A549 (cell line): ENCODE measurements at regions of chr11 and their contacts with region 1.

Region 1: GRCh38 chr11:69296890-69297786 is 3.2 kb downstream of the MYEOV start:
- DNase-seq: peak; percentile 93 to 97
- ATAC-seq: peak; percentile 15 to 34
- H3K4me3 ChIP-seq: peak overlapping the region; percentile 69
- H3K27ac ChIP-seq: peak overlapping the region; percentile 93 to 98
- H3K4me1 ChIP-seq: peaks cover 75% of the 10 kb centered on the region
- CTCF ChIP-seq: no peak
- EP300 ChIP-seq: peak; percentile 87 to 95; a peak in 4 of 5 replicates
- POLR2A ChIP-seq: no peak
- RAD21 ChIP-seq: peak; percentile 1 to 66; a peak in 3 of 5 replicates

Region 2: GRCh38 chr11:69280994-69281393 is 16.1 kb before region 1 on chr11:
- CTCF ChIA-PET with region 1: interaction called, 15 read pairs
- POLR2A ChIA-PET with region 1: interaction called, 6 read pairs
- DNase-seq: peak; percentile 64 to 79
- ATAC-seq: peak; percentile 46 to 71; a peak in 4 of 6 replicates
- H3K4me3 ChIP-seq: no peak overlapping the region
- H3K27ac ChIP-seq: peak overlapping the region; percentile 35 to 75
- H3K4me1 ChIP-seq: peaks cover 33% of the 10 kb centered on the region
- CTCF ChIP-seq: no peak
- EP300 ChIP-seq: no peak
- POLR2A ChIP-seq: no peak
- RAD21 ChIP-seq: no peak

Region 3: GRCh38 chr11:69362316-69362715 is 65.2 kb after region 1 on chr11:
- CTCF ChIA-PET with region 1: no interaction called
- POLR2A ChIA-PET with region 1: no interaction called
- DNase-seq: no peak
- ATAC-seq: no peak
- H3K4me3 ChIP-seq: no peak overlapping the region
- H3K27ac ChIP-seq: no peak overlapping the region
- H3K4me1 ChIP-seq: peaks cover 6% of the 10 kb centered on the region; the same call in 1 of the 3 replicates
- CTCF ChIP-seq: no peak
- EP300 ChIP-seq: no peak
- POLR2A ChIP-seq: no peak
- RAD21 ChIP-seq: no peak